ENCODE measurements at regions of chr7 and their contacts with region 1.

Region 1: GRCh38 chr7:112136271-112137008 is 69.8 kb downstream of the DOCK4 start:
- DNase-seq: no peak
- ATAC-seq: no peak; the same call in 1 of the 2 replicates
- H3K4me3 ChIP-seq: no peak overlapping the region
- H3K27ac ChIP-seq: peak overlapping the region; percentile 66
- H3K4me1 ChIP-seq: peaks cover 34% of the 10 kb centered on the region
- H3K27me3 ChIP-seq: no peaks in the 10 kb centered on the region
- CTCF ChIP-seq: no peak

Region 2: DNA sequence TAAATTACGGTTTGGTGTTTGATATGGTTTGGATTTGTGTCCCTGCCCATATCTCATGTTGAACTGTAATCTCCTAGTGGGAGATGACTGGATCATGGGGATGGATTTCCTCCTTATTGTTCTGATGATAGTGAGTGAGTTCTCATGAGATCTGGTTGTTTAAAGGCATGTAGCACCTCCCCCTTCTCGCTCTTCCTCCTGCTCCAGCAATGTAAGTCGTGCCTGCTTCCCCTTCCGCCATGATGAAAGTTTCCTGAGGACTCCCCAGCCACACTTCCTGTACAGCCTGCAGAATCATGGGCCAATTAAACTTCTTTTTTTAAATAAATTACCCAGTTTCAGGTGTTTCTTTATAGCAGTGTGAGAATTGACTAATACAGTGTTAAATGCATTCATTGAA is 46.9 kb before region 1 on chr7:
- CTCF ChIA-PET with region 1: no interaction called
- POLR2A ChIA-PET with region 1: no interaction called
- intact Hi-C with region 1: loop called (anchors 2 kb)
- DNase-seq: no peak
- ATAC-seq: no peak
- H3K4me3 ChIP-seq: no peak overlapping the region
- H3K27ac ChIP-seq: no peak overlapping the region
- H3K4me1 ChIP-seq: peaks cover 27% of the 10 kb centered on the region
- H3K27me3 ChIP-seq: no peaks in the 10 kb centered on the region
- CTCF ChIP-seq: no peak

Region 3: GRCh38 chr7:112182749-112183148 is 46.3 kb after region 1 on chr7:
- CTCF ChIA-PET with region 1: no interaction called
- POLR2A ChIA-PET with region 1: no interaction called
- intact Hi-C with region 1: no loop called
- DNase-seq: no peak
- ATAC-seq: no peak
- H3K4me3 ChIP-seq: no peak overlapping the region
- H3K27ac ChIP-seq: no peak overlapping the region
- H3K4me1 ChIP-seq: peaks cover 28% of the 10 kb centered on the region
- H3K27me3 ChIP-seq: no peaks in the 10 kb centered on the region
- CTCF ChIP-seq: no peak

Measured in PC-3 (cell line).